ENCODE measurements at regions of chr12 and their contacts with region 1.

Region 1: GRCh38 chr12:55073043-55074022 is 52.9 kb upstream of the OR9K2 start:
- DNase-seq: peak; percentile 57
- CTCF ChIP-seq: peak; percentile 64

Region 2: GRCh38 chr12:54759751-54760150 is 313.6 kb before region 1 on chr12:
- in situ Hi-C with region 1: loop called (anchors 10 kb)
- DNase-seq: peak; percentile 15
- CTCF ChIP-seq: peak; percentile 15

Region 3: DNA sequence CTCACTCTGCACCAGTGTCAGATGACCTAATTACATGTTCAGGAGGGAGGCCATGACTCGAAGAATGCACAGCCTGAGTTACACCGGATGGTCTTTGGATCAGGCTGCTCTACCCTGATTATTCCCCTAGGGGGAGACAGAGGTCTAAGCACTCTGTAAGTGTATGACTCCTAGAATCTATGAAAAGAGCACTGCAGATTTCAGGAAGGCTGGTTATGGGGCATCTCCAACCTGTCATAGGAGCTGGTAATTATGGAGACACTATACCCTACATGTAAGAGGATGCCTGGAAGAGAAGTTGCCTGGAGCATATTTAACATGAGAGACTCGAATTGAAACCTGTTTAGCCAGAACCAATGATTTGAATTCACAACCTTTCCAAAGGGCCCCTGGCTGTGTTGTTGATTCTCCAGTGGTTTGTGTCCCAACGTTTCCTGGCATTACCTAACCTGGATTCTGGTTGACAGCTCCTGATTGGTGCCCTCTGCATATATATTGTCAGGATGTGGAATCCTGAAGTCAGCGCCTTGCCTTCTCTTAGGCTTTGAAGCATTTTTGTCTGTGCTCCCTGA is 219.3 kb before region 1 on chr12 and contains the start of gene MUCL1:
- in situ Hi-C with region 1: loop called (anchors 10 kb)
- DNase-seq: peak; percentile 45
- CTCF ChIP-seq: peak; percentile 68

Region 4: DNA sequence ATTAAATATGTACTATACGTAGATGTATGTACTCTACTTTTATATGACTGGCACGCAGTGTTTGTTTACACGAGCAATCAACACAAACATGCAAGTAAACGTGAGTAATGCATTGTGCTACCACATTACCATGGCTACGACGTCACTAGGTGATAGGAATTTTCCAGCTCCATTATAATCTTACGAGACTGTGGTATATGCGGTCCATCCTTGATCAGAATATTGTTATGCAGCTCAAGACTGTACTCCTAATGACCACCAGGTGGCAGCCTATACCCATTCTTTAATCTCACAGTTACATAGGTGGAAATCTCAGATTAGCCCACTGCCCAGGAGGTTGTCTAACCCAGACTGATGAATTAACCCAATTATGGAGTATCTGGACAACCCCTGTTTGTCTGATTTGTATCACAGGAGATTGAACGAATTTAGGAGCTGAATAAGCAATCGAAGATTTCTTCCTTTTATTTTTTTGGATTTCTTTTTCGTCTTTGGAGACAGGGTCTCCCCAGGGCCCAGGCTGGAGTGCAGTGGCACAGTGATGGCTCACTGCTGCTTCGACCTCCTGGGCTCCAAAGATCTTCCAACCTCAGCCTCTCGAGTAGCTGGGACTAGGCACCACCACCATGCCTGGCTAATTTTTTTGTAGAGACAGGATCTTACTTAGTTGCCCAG is 80.0 kb before region 1 on chr12:
- in situ Hi-C with region 1: loop called (anchors 5 kb)
- DNase-seq: peak; percentile 61
- CTCF ChIP-seq: peak; percentile 79

Measured in GM13976 (cell line).